PC-3 (cell line): ENCODE measurements at regions of chr12 and their contacts with region 1.

Region 1: DNA sequence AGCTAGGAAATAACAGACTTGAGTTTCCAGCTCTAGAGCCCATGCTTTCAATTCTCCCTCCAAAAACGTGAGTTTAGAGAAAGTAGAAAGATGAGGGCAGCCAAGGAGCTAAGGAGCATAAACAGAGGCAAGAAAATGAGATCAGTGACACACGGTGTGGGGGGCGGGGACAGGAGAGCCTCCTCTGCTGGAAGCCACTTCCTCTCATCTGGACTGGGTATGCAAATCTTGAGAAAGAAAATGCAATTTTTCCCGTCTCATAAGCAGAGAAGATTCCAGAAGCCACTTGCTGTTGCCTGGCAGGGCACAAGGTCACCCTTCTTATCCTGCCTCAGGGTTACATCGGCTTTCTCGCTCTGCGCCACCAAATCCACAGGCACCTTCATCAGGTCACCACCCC is 6.0 kb downstream of the OR10P1 start:
- DNase-seq: no peak
- ATAC-seq: no peak
- H3K4me3 ChIP-seq: no peak overlapping the region
- H3K27ac ChIP-seq: no peak overlapping the region
- H3K4me1 ChIP-seq: peaks cover 4% of the 10 kb centered on the region; the same call in 1 of the 2 replicates
- H3K27me3 ChIP-seq: peaks cover 39% of the 10 kb centered on the region
- CTCF ChIP-seq: no peak

Region 2: GRCh38 chr12:54068418-54069070 is 1574.1 kb before region 1 on chr12:
- CTCF ChIA-PET with region 1: no interaction called
- POLR2A ChIA-PET with region 1: interaction called, 10 read pairs
- intact Hi-C with region 1: no loop called
- DNase-seq: peak; percentile 89
- ATAC-seq: peak; percentile 98
- H3K4me3 ChIP-seq: no peak overlapping the region
- H3K27ac ChIP-seq: no peak overlapping the region
- H3K4me1 ChIP-seq: peaks cover 15% of the 10 kb centered on the region
- H3K27me3 ChIP-seq: no peaks in the 10 kb centered on the region
- CTCF ChIP-seq: no peak

Region 3: DNA sequence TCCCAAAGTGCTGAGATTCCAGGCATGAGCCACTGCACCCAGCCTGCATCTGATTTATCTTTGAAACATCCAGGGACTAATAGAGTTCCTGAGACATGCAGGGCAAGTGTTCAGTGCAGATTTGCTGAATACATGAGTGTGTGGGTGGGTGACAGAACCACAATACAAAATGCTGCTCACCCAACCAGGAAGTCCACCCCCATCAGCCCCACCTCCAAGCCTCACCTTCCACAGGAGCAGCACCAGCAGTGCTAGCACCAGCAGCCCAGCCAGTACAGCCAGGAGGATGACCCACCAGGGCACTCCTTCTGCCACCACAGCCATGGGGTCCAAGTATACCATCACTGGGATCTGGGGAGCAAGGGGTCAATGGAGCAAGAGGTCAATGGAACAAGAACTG is 45.1 kb after region 1 on chr12:
- CTCF ChIA-PET with region 1: no interaction called
- POLR2A ChIA-PET with region 1: no interaction called
- intact Hi-C with region 1: no loop called
- DNase-seq: no peak
- ATAC-seq: no peak
- H3K4me3 ChIP-seq: no peak overlapping the region
- H3K27ac ChIP-seq: no peak overlapping the region
- H3K4me1 ChIP-seq: no peaks in the 10 kb centered on the region
- H3K27me3 ChIP-seq: no peaks in the 10 kb centered on the region
- CTCF ChIP-seq: no peak

Region 4: DNA sequence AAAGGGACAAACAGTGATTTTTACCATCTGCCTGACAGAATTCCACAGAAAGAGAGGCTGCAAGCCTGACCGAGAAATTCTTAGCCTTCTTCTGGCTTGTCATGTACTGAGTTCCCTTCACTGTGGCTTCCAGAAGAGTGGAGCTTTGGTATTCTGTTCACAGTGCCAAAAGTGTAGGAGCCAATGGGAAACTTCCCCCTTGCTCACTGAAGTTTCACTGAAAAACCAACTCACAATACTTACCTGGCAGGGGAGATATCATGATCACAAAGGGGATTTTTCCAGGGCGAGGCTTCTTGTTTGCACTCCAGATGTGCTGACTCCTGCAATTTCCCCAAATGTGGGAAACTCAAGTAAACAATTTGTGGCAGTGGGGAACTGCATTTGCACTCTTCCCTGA is 231.8 kb after region 1 on chr12:
- CTCF ChIA-PET with region 1: interaction called, 19 read pairs
- POLR2A ChIA-PET with region 1: no interaction called
- intact Hi-C with region 1: no loop called
- DNase-seq: no peak
- ATAC-seq: no peak
- H3K4me3 ChIP-seq: no peak overlapping the region
- H3K27ac ChIP-seq: no peak overlapping the region
- H3K4me1 ChIP-seq: no peaks in the 10 kb centered on the region
- H3K27me3 ChIP-seq: no peaks in the 10 kb centered on the region
- CTCF ChIP-seq: no peak

Region 5: GRCh38 chr12:55899082-55899481 is 256.4 kb after region 1 on chr12:
- CTCF ChIA-PET with region 1: no interaction called
- POLR2A ChIA-PET with region 1: no interaction called
- intact Hi-C with region 1: no loop called
- DNase-seq: no peak
- ATAC-seq: no peak
- H3K4me3 ChIP-seq: no peak overlapping the region
- H3K27ac ChIP-seq: no peak overlapping the region
- H3K4me1 ChIP-seq: no peaks in the 10 kb centered on the region
- H3K27me3 ChIP-seq: no peaks in the 10 kb centered on the region
- CTCF ChIP-seq: no peak